CD4-positive, alpha-beta T cell (primary cell): ENCODE measurements at regions of chr16 and their contacts with region 1.

Region 1: GRCh38 chr16:9134739-9135138 is 43.3 kb downstream of the HAPSTR1 start:
- DNase-seq: peak; percentile 35 to 77 (median 52)
- ATAC-seq: peak; percentile 80
- H3K4me3 ChIP-seq: no peak overlapping the region
- H3K4me3 Mint-ChIP-seq: no peak overlapping the region
- H3K27ac ChIP-seq: no peak overlapping the region
- H3K27ac Mint-ChIP-seq: peak overlapping the region; percentile 47
- H3K4me1 ChIP-seq: peaks cover 22% of the 10 kb centered on the region
- H3K4me1 Mint-ChIP-seq: peaks cover 30% of the 10 kb centered on the region
- H3K27me3 ChIP-seq: peaks cover 3 to 4% of the 10 kb centered on the region in 2 experiments
- H3K27me3 Mint-ChIP-seq: no peaks in the 10 kb centered on the region
- CTCF ChIP-seq: peak; percentile 72

Region 2: GRCh38 chr16:8660841-8661301 is 473.9 kb before region 1 on chr16:
- CTCF ChIA-PET with region 1: no interaction called
- POLR2A ChIA-PET with region 1: no interaction called
- intact Hi-C with region 1: loop called in 1 of 2 experiments (anchors 5 kb)
- DNase-seq: peak; percentile 17 to 71 (median 42)
- ATAC-seq: peak; percentile 64
- H3K4me3 ChIP-seq: no peak overlapping the region
- H3K4me3 Mint-ChIP-seq: no peak overlapping the region
- H3K27ac ChIP-seq: no peak overlapping the region
- H3K27ac Mint-ChIP-seq: no peak overlapping the region
- H3K4me1 ChIP-seq: no peaks in the 10 kb centered on the region
- H3K4me1 Mint-ChIP-seq: no peaks in the 10 kb centered on the region
- H3K27me3 ChIP-seq: no peaks in the 10 kb centered on the region
- H3K27me3 Mint-ChIP-seq: no peaks in the 10 kb centered on the region
- CTCF ChIP-seq: peak; percentile 59

Region 3: GRCh38 chr16:8905168-8905762 is 229.5 kb before region 1 on chr16:
- CTCF ChIA-PET with region 1: no interaction called
- POLR2A ChIA-PET with region 1: no interaction called
- intact Hi-C with region 1: loop called (anchors 5 to 10 kb)
- DNase-seq: peak in 3 of 14 experiments; percentile 37 to 45 (median 38)
- ATAC-seq: peak; percentile 51
- H3K4me3 ChIP-seq: no peak overlapping the region
- H3K4me3 Mint-ChIP-seq: no peak overlapping the region
- H3K27ac ChIP-seq: no peak overlapping the region
- H3K27ac Mint-ChIP-seq: peak overlapping the region; percentile 3
- H3K4me1 ChIP-seq: peaks cover 11% of the 10 kb centered on the region
- H3K4me1 Mint-ChIP-seq: peaks cover 13% of the 10 kb centered on the region
- H3K27me3 ChIP-seq: no peaks in the 10 kb centered on the region
- H3K27me3 Mint-ChIP-seq: no peaks in the 10 kb centered on the region
- CTCF ChIP-seq: peak; percentile 18